ENCODE measurements at regions of chr1 and their contacts with region 1.

Region 1: GRCh38 chr1:155167166-155168104 is 5.7 kb downstream of the KRTCAP2 start:
- DNase-seq: peak; percentile 95

Region 2: GRCh38 chr1:155091071-155091709 is 76.2 kb before region 1 on chr1:
- intact Hi-C with region 1: loop called (anchors 1 kb)
- DNase-seq: peak; percentile 87

Region 3: GRCh38 chr1:155127105-155127964 is 40.1 kb before region 1 on chr1 and contains the start of gene EFNA1:
- intact Hi-C with region 1: loop called (anchors 2 kb)
- DNase-seq: peak; percentile 81
- total RNA-seq, gene EFNA1: 30.2 TPM

Region 4: GRCh38 chr1:155206891-155207805 is 39.7 kb after region 1 on chr1:
- intact Hi-C with region 1: no loop called
- DNase-seq: peak; percentile 93